Activated naive CD4-positive, alpha-beta T cell treated with anti-CD3 and anti-CD28 coated beads for 36 hours (primary cell): ENCODE measurements at regions of chr2 and their contacts with region 1.

Region 1: GRCh38 chr2:157497638-157498314 is 53.9 kb upstream of the CYTIP start:
- DNase-seq: peak; percentile 25
- H3K4me3 Mint-ChIP-seq: no peak overlapping the region
- H3K27ac Mint-ChIP-seq: no peak overlapping the region
- H3K4me1 Mint-ChIP-seq: peaks cover 23% of the 10 kb centered on the region
- H3K27me3 Mint-ChIP-seq: no peaks in the 10 kb centered on the region

Region 2: DNA sequence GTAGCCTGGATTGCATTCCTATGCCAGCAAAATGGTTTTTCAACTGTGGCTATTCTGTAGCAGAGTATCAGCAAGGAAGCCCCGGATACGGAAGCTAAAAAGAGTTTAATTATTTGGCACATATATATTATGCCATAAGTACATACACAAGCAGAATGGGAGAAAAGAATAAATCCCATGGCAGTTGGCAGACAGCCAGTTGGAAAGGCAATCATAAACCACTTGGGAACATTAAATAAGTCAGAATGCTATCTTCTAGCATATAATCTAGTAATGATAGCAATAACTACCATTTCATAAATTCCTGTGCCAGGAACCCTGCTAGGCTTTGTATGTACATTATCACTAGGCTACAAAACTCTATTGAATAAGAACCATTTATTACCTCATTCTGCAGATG is 214.3 kb before region 1 on chr2:
- CTCF ChIA-PET with region 1: no interaction called
- intact Hi-C with region 1: no loop called
- DNase-seq: no peak
- H3K4me3 Mint-ChIP-seq: no peak overlapping the region
- H3K27ac Mint-ChIP-seq: no peak overlapping the region
- H3K4me1 Mint-ChIP-seq: no peaks in the 10 kb centered on the region
- H3K27me3 Mint-ChIP-seq: peaks cover 7% of the 10 kb centered on the region

Region 3: DNA sequence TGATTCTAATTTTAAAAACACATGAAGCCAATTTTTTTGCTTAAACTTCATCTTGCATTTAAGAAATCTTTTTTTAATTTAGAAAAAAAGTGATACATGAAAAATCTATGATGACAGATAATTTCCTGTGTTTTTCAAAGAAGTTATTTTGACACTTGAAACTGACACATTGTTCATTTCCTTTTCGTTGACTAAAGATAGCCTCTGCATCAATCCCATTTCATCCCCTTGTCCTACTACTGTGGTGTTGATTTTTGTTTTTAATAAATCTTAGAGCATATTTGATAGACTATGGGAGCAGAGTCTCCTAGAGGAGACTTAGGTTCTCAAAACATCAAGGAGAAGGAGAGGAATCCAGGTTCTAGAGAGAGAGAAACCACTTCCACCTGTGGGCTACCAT is 60.0 kb after region 1 on chr2:
- CTCF ChIA-PET with region 1: no interaction called
- intact Hi-C with region 1: loop called (anchors 2 kb)
- DNase-seq: no peak
- H3K4me3 Mint-ChIP-seq: no peak overlapping the region
- H3K27ac Mint-ChIP-seq: no peak overlapping the region
- H3K4me1 Mint-ChIP-seq: peaks cover 29% of the 10 kb centered on the region
- H3K27me3 Mint-ChIP-seq: no peaks in the 10 kb centered on the region

Region 4: DNA sequence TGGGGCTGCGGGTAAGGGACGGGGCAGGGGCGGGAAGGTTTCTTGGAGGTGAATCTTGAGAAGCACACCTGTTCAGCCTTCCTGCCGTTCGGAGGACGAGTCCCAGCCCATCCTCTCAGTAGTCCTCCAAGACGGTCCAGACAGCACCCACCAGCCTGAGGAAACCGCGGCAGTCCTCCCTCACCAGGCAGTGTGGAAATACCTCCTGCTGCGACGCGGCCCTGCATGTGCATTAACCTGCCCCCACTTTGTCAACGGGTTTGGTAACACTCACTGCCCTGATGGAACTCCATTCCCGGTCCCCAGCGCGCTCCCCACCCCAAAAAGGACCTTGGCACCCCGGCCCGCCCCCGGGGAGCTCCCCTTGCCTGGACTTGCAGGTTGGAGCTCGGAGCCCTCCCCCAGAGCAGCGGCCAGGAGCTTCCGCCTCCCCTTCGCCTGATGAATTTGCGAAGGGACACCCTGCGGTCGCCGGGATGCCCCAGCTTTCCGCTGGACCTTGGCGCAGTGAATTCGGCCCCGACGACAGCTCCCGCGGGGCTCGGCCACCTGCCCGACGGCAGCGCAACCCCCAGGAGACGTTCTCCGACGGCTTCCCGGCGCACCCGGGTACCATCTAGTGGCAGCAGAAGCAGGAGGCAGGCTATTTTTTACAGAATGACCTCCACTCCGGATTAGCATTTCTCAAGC is 99.4 kb after region 1 on chr2:
- CTCF ChIA-PET with region 1: interaction called, 25 read pairs
- intact Hi-C with region 1: loop called (anchors 1 kb)
- DNase-seq: peak; percentile 78
- H3K4me3 Mint-ChIP-seq: peak overlapping the region; percentile 71
- H3K27ac Mint-ChIP-seq: no peak overlapping the region
- H3K4me1 Mint-ChIP-seq: peaks cover 18% of the 10 kb centered on the region
- H3K27me3 Mint-ChIP-seq: no peaks in the 10 kb centered on the region

Region 5: DNA sequence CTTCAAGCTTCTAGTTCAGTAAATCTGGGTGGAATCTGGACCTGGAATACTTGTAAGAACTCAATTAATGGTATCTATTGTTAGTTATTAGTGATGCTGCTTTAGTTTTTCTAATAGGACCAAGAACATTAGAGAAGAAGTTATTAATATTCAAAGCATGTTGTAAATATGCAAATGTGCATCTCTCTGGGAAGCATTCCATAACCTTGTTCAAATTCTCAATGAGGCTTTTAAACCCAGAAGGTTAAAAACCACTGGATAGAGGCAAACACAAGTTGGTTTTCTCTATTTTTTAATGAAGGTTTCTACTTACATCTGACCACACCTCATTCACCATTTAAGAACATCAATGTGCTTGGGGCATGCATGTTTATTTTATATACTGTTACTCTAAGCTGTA is 147.0 kb after region 1 on chr2:
- CTCF ChIA-PET with region 1: no interaction called
- intact Hi-C with region 1: no loop called
- DNase-seq: no peak
- H3K4me3 Mint-ChIP-seq: no peak overlapping the region
- H3K27ac Mint-ChIP-seq: no peak overlapping the region
- H3K4me1 Mint-ChIP-seq: no peaks in the 10 kb centered on the region
- H3K27me3 Mint-ChIP-seq: no peaks in the 10 kb centered on the region

Region 6: GRCh38 chr2:157751462-157752058 is 253.8 kb after region 1 on chr2:
- CTCF ChIA-PET with region 1: interaction called, 3 read pairs
- intact Hi-C with region 1: loop called (anchors 5 kb)
- DNase-seq: peak; percentile 51
- H3K4me3 Mint-ChIP-seq: no peak overlapping the region
- H3K27ac Mint-ChIP-seq: no peak overlapping the region
- H3K4me1 Mint-ChIP-seq: peaks cover 4% of the 10 kb centered on the region
- H3K27me3 Mint-ChIP-seq: no peaks in the 10 kb centered on the region

Region 7: DNA sequence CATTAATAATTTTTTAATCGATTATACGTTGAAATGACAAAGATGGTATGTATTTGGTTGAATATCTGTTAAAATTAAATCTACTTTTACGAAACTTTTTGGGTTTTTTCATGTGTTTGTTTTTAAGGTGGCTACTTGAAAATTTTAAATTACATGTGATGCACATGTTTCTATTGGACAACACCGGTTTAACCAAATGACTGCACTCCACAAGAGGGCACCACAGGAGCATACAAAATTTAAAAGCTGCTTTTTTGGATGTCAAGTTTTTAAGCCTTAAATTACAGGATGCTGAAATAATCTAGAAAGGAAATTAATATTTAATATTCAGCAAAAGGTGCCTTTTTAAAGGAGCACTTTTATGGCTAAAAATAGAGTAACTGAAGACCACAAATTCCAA is 279.7 kb after region 1 on chr2:
- CTCF ChIA-PET with region 1: interaction called, 3 read pairs
- intact Hi-C with region 1: loop called (anchors 1 kb)
- DNase-seq: peak; percentile 80
- H3K4me3 Mint-ChIP-seq: no peak overlapping the region
- H3K27ac Mint-ChIP-seq: no peak overlapping the region
- H3K4me1 Mint-ChIP-seq: peaks cover 12% of the 10 kb centered on the region
- H3K27me3 Mint-ChIP-seq: no peaks in the 10 kb centered on the region

Region 8: GRCh38 chr2:157971697-157972096 is 473.9 kb after region 1 on chr2:
- CTCF ChIA-PET with region 1: no interaction called
- intact Hi-C with region 1: no loop called
- DNase-seq: no peak
- H3K4me3 Mint-ChIP-seq: no peak overlapping the region
- H3K27ac Mint-ChIP-seq: no peak overlapping the region
- H3K4me1 Mint-ChIP-seq: no peaks in the 10 kb centered on the region
- H3K27me3 Mint-ChIP-seq: no peaks in the 10 kb centered on the region